Ovary (tissue), 10 donors: ENCODE measurements at regions of chr1 and their contacts with region 1.

Region 1: GRCh38 chr1:101309334-101310311 is 72.8 kb downstream of the S1PR1 start:
- DNase-seq: peak; percentile 33 to 56 (median 48)
- H3K4me3 ChIP-seq: peak overlapping the region; percentile 27
- H3K27ac ChIP-seq: no peak overlapping the region
- H3K4me1 ChIP-seq: no peaks in the 10 kb centered on the region
- H3K27me3 ChIP-seq: no peaks in the 10 kb centered on the region
- CTCF ChIP-seq: peak in 2 of 3 donors; percentile 19 to 69
- EP300 ChIP-seq: no peak
- POLR2A ChIP-seq: no peak

Region 2: DNA sequence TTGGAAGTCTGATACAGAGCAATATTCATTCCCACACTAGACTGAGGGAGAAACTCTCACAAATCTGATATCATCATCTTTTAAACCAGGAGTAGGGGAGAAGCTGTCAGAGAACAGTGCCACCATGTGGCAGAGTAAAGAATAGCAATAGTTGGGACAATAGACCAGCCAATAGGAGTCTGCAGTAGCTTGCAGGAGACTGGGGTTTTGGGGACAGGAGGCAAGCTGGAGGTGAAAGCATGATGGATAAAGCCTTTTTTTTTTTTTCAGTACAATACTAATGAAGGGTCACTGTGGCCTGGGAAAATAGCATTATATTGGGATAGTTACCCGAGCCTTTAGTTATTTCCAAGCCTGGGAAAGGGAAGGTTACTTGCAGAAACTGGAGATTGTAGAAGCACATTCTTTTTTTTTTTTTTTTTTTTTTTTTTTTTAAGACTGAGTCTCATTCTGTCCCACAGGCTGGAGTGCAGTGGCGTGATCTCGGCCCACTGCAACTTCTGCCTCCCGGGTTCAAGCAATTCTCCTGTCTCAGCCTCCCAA is 47.9 kb after region 1 on chr1:
- intact Hi-C with region 1: loop called in 2 of 4 experiments (anchors 1 to 5 kb)
- DNase-seq: peak in 4 of 5 donors; percentile 20 to 49 (median 26)
- H3K4me3 ChIP-seq: no peak overlapping the region
- H3K27ac ChIP-seq: no peak overlapping the region
- H3K4me1 ChIP-seq: no peaks in the 10 kb centered on the region
- H3K27me3 ChIP-seq: no peaks in the 10 kb centered on the region
- CTCF ChIP-seq: peak; percentile 37 to 52 (median 43)
- EP300 ChIP-seq: no peak
- POLR2A ChIP-seq: no peak

Region 3: GRCh38 chr1:101364370-101365120 is 54.9 kb after region 1 on chr1:
- intact Hi-C with region 1: loop called in 1 of 4 experiments (anchors 5 kb)
- DNase-seq: no peak
- H3K4me3 ChIP-seq: no peak overlapping the region
- H3K27ac ChIP-seq: no peak overlapping the region
- H3K4me1 ChIP-seq: no peaks in the 10 kb centered on the region
- H3K27me3 ChIP-seq: no peaks in the 10 kb centered on the region
- CTCF ChIP-seq: no peak
- EP300 ChIP-seq: no peak
- POLR2A ChIP-seq: no peak

Region 4: DNA sequence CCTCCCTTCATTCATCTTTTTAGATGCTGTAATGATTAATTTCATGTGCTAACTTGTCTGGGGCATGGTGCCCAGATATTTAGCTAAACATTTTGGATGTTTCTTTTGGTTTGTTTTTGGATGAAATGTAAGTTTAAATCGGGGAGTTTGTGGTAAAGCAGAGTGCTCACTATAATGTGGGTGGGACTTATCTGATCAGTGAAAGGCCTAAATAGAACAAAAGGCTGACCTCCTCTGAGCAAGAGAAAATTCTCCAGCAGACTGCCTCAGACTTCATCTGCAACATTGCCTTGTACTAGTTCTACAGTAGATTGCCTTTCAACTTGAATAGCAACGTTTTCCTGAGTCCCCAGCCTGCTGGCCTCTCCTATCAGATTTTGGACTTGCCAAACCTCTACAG is 110.8 kb after region 1 on chr1:
- intact Hi-C with region 1: no loop called
- DNase-seq: no peak
- H3K4me3 ChIP-seq: no peak overlapping the region
- H3K27ac ChIP-seq: no peak overlapping the region
- H3K4me1 ChIP-seq: no peaks in the 10 kb centered on the region
- H3K27me3 ChIP-seq: no peaks in the 10 kb centered on the region
- CTCF ChIP-seq: no peak
- EP300 ChIP-seq: no peak
- POLR2A ChIP-seq: no peak